ENCODE measurements at regions of chr1 and their contacts with region 1.

Region 1: GRCh38 chr1:231778009-231778719 is 151.6 kb downstream of the DISC1 start:
- H3K4me3 Mint-ChIP-seq: peak overlapping the region; percentile 32
- H3K27ac Mint-ChIP-seq: peak overlapping the region; percentile 94
- H3K4me1 Mint-ChIP-seq: peaks cover 81% of the 10 kb centered on the region
- H3K27me3 Mint-ChIP-seq: no peaks in the 10 kb centered on the region

Region 2: DNA sequence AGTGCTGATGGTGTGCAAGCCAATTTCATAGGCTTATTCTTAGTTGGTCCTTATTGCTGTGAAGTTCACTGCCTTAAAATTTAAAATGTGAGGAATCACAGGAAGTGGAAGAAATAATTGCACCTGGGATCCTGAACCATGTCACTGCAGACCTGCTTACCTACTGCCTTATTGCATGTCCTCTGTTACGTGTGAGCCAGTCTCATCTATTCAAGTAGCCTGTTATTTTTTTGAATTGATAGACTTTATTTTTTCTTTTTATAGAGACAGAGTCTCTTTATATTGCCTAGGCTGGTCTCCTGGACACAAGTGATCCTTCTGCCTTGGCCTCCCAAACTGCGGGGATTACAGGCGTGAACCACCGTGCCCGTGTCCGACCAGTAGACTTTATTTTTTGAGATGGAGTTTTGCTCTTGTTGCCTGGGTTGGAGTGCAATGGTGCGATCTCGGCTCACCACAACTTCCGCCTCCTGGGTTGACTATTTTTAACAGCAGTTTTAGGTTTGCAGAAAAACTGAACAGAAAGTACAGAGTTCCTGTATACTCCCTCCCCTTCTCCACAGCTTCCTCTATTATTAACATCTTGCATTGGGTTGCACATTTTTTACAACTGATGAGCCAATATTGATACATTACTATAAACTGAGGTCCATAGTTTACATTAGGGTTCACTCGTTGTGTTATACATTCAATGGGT is 165.6 kb before region 1 on chr1:
- intact Hi-C with region 1: loop called (anchors 5 kb)
- H3K4me3 Mint-ChIP-seq: peak overlapping the region; percentile 46
- H3K27ac Mint-ChIP-seq: peak overlapping the region; percentile 76
- H3K4me1 Mint-ChIP-seq: peaks cover 79% of the 10 kb centered on the region
- H3K27me3 Mint-ChIP-seq: no peaks in the 10 kb centered on the region

Measured in dendritic cell treated with granulocyte-macrophage colony-stimulating factor and Interleukin-4, amounts not matched to agents 40 ng/mL and 50 ng/mL, for 4 days (primary cell).